ENCODE measurements at regions of chr21 and their contacts with region 1.

Region 1: DNA sequence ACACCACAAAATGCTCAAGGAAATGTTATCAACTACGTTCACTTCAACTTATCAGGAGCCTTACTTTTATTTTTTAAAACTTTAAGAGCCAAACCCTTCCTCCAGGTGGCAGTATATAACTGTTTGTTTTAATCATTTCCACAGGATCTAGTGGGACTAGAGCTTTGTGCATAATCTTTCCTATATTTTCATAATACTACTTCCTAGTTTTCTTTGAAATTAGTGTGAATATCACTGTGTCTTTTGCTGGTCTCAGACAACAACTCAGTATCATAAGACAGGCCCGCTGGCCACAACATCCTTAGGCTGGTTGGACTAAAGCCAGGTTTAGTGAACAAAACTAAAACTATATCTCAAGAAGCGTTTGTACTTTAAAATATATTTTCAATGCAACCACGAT is 145.5 kb downstream of the TIAM1 start:
- DNase-seq: peak; percentile 69
- H3K4me3 ChIP-seq: no peak overlapping the region
- H3K27ac ChIP-seq: no peak overlapping the region
- H3K4me1 ChIP-seq: no peaks in the 10 kb centered on the region
- CTCF ChIP-seq: peak; percentile 92

Region 2: DNA sequence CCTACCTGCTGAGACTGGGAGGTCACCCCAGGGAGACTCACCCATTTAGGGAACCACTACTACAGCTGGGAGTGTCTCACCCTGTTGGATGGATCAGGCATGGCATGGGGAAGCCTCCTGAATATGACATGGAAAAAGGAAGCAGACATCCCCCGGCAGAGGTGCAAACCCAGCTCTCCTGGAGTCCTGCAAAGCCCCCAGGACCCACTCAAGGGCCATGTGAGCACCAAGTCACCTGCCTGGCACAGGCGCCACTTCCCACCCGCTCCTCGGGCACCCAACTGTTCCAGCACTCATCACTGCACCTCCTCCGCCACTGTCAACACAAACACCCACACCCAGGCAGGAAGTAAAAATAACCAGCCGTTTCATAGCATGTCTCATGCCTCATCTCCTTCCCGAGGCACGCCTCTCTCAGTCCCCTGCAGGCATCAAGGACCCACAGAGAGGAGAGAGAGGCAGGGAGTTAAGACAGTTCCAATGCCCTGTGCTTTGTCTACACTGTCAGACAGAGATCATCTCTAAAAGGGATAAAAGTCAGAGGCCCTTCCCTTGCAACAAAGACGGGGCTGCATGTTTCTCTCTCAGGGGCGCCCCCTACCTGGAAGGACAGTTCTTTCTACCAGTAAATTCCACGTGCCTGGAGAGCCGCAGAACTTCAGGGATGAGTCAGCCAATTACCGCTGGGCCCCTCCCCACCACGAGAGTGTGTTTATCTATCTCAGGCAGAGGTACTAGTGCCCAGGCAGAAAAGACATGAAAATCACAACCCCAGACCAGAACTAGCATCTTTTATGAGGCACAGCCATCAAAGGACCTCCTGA is 310.8 kb after region 1 on chr21:
- CTCF ChIA-PET with region 1: no interaction called
- POLR2A ChIA-PET with region 1: interaction called, 4 read pairs
- intact Hi-C with region 1: loop called (anchors 5 kb)
- DNase-seq: peak; percentile 64
- H3K4me3 ChIP-seq: no peak overlapping the region
- H3K27ac ChIP-seq: peak overlapping the region; percentile 5
- H3K4me1 ChIP-seq: peaks cover 50% of the 10 kb centered on the region
- CTCF ChIP-seq: peak; percentile 86

Region 3: GRCh38 chr21:31580866-31581276 is 382.3 kb after region 1 on chr21:
- CTCF ChIA-PET with region 1: interaction called, 10 read pairs
- POLR2A ChIA-PET with region 1: interaction called, 6 read pairs
- intact Hi-C with region 1: loop called (anchors 1 kb)
- DNase-seq: peak; percentile 77
- H3K4me3 ChIP-seq: no peak overlapping the region
- H3K27ac ChIP-seq: no peak overlapping the region
- H3K4me1 ChIP-seq: no peaks in the 10 kb centered on the region
- CTCF ChIP-seq: peak; percentile 87

Region 4: GRCh38 chr21:31604591-31605190 is 406.1 kb after region 1 on chr21:
- CTCF ChIA-PET with region 1: no interaction called
- POLR2A ChIA-PET with region 1: no interaction called
- intact Hi-C with region 1: loop called (anchors 1 kb)
- DNase-seq: peak; percentile 83
- H3K4me3 ChIP-seq: no peak overlapping the region
- H3K27ac ChIP-seq: no peak overlapping the region
- H3K4me1 ChIP-seq: no peaks in the 10 kb centered on the region
- CTCF ChIP-seq: peak; percentile 97